ENCODE measurements at regions of chr14 and their contacts with region 1.

Region 1: DNA sequence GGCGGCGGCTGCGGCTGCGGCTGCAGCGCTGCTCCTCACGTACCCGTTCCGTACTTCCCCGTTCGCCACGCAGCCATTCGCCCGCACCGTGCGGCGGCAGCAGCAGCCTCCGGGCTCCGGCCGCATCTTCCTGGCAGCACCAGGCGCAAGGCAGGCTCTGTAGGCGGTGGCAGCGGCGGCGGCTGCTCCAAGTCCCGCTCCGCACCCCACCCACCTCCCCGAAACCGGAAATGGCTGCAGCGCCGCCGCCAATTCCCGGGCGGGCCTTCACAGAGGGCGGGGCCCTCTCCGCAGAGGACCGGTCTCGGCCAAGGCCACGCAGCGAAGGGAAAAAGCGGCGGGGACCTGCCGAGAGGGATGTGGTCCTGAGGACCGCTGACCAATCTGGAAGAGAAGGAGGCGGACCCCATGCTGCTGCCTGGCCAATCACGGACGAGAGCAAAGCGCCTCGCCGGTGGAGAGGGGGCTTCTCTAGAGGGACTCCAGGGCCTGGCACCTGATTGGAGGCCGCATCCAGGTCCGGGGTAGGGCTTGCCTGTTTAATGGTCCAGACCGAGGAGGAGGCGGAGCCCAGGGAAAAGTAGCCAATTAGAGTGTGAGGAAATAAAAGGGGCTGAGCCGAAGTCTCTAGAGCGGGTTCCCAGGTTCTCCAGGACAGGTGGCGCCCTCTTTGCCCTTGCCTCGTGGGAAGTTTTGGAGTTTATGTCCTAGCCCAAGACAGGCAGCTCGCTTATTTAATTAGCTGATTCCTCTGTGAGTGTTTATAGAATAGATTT is at the start of gene SPTLC2:
- DNase-seq: peak; percentile 95 to 99 (median 97)
- H3K4me3 ChIP-seq: peak within 1 kb of the TSS; percentile 50 to 59
- H3K4me3 Mint-ChIP-seq: peak within 1 kb of the TSS; percentile 88 to 98 (median 92)
- H3K27ac ChIP-seq: peak within 1 kb of the TSS; percentile 68
- H3K27ac Mint-ChIP-seq: peak within 1 kb of the TSS; percentile 86 to 96 (median 92)
- H3K4me1 ChIP-seq: peaks cover 44% of the 10 kb centered on the region
- H3K4me1 Mint-ChIP-seq: peaks cover 29 to 52% (median 38%) of the 10 kb centered on the region in 4 donors
- H3K27me3 ChIP-seq: no peaks in the 10 kb centered on the region
- H3K27me3 Mint-ChIP-seq: no peaks in the 10 kb centered on the region
- total RNA-seq, gene SPTLC2: 25.9 to 31.3 TPM

Region 2: GRCh38 chr14:77376771-77377501 is 239.7 kb before region 1 on chr14 and contains the starts of genes SAMD15 and TMED8:
- CTCF ChIA-PET with region 1: no interaction called
- POLR2A ChIA-PET with region 1: interaction called, 3 read pairs
- intact Hi-C with region 1: loop called (anchors 10 kb)
- DNase-seq: peak; percentile 81 to 87 (median 87)
- H3K4me3 ChIP-seq: peak within 1 kb of the TSS; percentile 94 to 97
- H3K4me3 Mint-ChIP-seq: peak within 1 kb of the TSS; percentile 85 to 94 (median 90)
- H3K27ac ChIP-seq: peak within 1 kb of the TSS; percentile 74
- H3K27ac Mint-ChIP-seq: peak within 1 kb of the TSS in 6 of 7 donors; percentile 84 to 95 (median 92)
- H3K4me1 ChIP-seq: peaks cover 46% of the 10 kb centered on the region
- H3K4me1 Mint-ChIP-seq: peaks cover 30 to 42% (median 36%) of the 10 kb centered on the region in 4 donors
- H3K27me3 ChIP-seq: no peaks in the 10 kb centered on the region
- H3K27me3 Mint-ChIP-seq: no peaks in the 10 kb centered on the region
- total RNA-seq, gene SAMD15: 0.11 to 0.38 TPM
- total RNA-seq, gene TMED8: 8.3 to 8.6 TPM

Region 3: DNA sequence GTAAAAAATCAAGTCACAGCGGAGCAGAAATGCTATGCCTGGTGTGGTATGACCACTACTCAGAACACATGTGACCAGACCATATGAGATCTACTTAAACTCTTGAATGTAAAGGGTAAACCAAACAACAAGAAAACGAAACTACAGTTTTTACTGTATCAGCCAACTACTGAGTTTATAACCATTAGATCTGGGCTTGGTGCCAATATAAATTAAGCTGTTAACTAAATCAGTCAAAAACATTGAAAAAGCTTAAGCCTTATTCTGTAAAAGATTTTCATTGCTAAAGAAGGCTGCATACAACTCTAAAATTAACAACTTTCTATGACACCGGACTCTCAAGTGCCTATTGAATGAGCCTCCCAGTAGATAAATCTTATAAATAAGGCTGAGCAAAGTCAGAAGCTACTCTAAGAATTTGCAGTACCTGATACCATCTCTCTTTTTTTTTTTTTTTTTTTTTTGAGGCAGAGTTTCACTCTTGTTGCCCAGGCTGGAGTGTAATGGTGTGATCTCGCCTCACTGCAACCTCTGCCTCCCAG is 35.6 kb before region 1 on chr14:
- CTCF ChIA-PET with region 1: interaction called, 5 read pairs
- POLR2A ChIA-PET with region 1: interaction called, 4 read pairs
- intact Hi-C with region 1: loop called (anchors 2 kb)
- DNase-seq: peak; percentile 41 to 69 (median 65)
- H3K4me3 ChIP-seq: peak overlapping the region in 1 of 2 donors; percentile 23
- H3K4me3 Mint-ChIP-seq: peak overlapping the region; percentile 60 to 90 (median 80)
- H3K27ac ChIP-seq: peak overlapping the region; percentile 29
- H3K27ac Mint-ChIP-seq: peak overlapping the region; percentile 37 to 90 (median 86)
- H3K4me1 ChIP-seq: peaks cover 20% of the 10 kb centered on the region
- H3K4me1 Mint-ChIP-seq: peaks cover 18 to 40% (median 31%) of the 10 kb centered on the region in 4 donors
- H3K27me3 ChIP-seq: no peaks in the 10 kb centered on the region
- H3K27me3 Mint-ChIP-seq: no peaks in the 10 kb centered on the region

Region 4: DNA sequence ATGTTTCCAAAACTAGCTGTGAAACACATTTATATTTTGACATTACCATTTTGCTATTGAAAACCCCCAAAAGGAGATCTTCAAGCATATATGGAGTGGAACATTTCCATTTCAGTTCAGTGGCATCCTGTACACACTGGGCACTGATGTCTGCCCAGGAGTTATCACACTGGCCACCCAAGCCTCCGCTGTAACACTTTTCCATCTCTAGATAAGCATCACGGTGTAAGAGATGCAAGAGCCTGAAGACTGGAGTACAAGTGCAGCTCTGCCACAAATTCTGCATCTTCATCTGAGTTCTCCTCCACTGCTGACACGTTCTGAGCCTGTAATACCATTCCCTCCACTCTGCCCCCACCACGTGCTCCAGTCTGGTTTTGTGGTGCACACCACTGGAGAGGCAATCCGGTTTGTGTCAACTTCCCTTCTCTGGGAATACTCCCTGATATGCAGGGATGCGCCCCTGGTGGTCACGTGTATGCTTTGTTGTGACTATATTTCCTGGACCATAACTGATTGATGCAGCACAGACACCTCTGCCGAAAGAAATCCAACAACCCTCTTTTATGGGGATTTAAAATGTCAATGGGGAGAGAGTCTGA is 12.9 kb before region 1 on chr14:
- CTCF ChIA-PET with region 1: interaction called, 4 read pairs
- POLR2A ChIA-PET with region 1: interaction called, 5 read pairs
- intact Hi-C with region 1: loop called (anchors 1 kb)
- DNase-seq: no peak
- H3K4me3 ChIP-seq: no peak overlapping the region
- H3K4me3 Mint-ChIP-seq: peak overlapping the region in 3 of 8 donors; percentile 0 to 15 (median 9)
- H3K27ac ChIP-seq: no peak overlapping the region
- H3K27ac Mint-ChIP-seq: peak overlapping the region in 5 of 7 donors; percentile 5 to 66 (median 48)
- H3K4me1 ChIP-seq: peaks cover 60% of the 10 kb centered on the region
- H3K4me1 Mint-ChIP-seq: peaks cover 43 to 76% (median 60%) of the 10 kb centered on the region in 4 donors
- H3K27me3 ChIP-seq: no peaks in the 10 kb centered on the region
- H3K27me3 Mint-ChIP-seq: no peaks in the 10 kb centered on the region

Region 5: GRCh38 chr14:77707724-77708408 is 91.2 kb after region 1 on chr14 and contains the starts of genes ALKBH1 and SLIRP:
- CTCF ChIA-PET with region 1: no interaction called
- POLR2A ChIA-PET with region 1: no interaction called
- intact Hi-C with region 1: loop called (anchors 1 kb)
- DNase-seq: peak; percentile 87 to 91 (median 87)
- H3K4me3 ChIP-seq: peak within 1 kb of the TSS; percentile 90 to 97
- H3K4me3 Mint-ChIP-seq: peak within 1 kb of the TSS; percentile 95 to 100 (median 98)
- H3K27ac ChIP-seq: peak within 1 kb of the TSS; percentile 80
- H3K27ac Mint-ChIP-seq: peak within 1 kb of the TSS; percentile 83 to 99 (median 96)
- H3K4me1 ChIP-seq: peaks cover 33% of the 10 kb centered on the region
- H3K4me1 Mint-ChIP-seq: peaks cover 26 to 49% (median 38%) of the 10 kb centered on the region in 4 donors
- H3K27me3 ChIP-seq: no peaks in the 10 kb centered on the region
- H3K27me3 Mint-ChIP-seq: no peaks in the 10 kb centered on the region
- total RNA-seq, gene ALKBH1: 16.2 to 20.1 TPM
- total RNA-seq, gene SLIRP: 37.5 to 40.6 TPM

Region 6: DNA sequence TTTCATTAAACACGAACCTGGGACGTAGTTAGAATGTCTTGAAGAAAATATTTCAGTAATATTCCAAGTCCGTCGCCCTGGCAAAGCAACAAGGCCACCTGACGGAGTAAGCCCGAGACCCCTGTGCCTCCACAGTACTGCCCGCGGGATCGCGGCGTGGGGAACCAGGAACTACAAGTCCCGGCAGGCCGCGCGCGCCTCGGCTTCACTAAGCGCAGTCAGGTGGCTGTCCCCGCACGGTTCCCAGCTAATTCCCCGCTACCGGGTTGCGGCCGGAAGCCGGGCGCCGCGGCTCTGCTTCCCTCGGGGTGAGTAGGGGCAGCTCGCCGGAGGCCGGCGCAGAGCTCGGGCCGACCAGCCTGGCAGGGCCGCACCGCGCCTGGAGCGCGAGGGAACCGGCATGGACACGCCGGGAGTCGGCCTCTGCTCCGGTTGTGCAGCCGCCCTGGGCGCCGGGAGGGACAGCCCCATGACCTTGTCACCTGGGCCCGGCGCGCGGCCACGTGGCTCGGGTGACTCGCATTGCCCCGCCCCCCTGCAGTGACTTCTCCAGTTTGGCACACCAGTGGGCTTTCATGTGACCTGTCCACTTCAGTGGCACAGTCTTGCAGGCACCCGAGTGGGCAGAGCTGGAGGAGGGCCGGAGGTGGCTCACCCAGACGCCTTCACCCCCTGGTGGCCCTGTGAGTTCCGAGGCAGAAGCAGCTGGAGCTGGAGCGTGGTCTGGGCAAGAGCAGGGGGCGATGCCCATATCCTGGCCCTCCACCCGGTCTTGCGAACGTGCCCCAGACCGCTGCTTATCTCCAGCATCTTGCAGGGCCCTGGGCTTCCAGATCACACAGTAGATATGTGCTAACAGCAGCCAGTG is 183.5 kb after region 1 on chr14 and contains the start of gene ADCK1:
- CTCF ChIA-PET with region 1: no interaction called
- POLR2A ChIA-PET with region 1: no interaction called
- intact Hi-C with region 1: loop called (anchors 2 kb)
- DNase-seq: peak; percentile 83 to 88 (median 85)
- H3K4me3 ChIP-seq: peak within 1 kb of the TSS; percentile 83 to 87
- H3K4me3 Mint-ChIP-seq: peak within 1 kb of the TSS; percentile 83 to 90 (median 86)
- H3K27ac ChIP-seq: peak within 1 kb of the TSS; percentile 71
- H3K27ac Mint-ChIP-seq: peak within 1 kb of the TSS; percentile 77 to 93 (median 91)
- H3K4me1 ChIP-seq: peaks cover 7% of the 10 kb centered on the region
- H3K4me1 Mint-ChIP-seq: peaks cover 2 to 11% (median 9%) of the 10 kb centered on the region in 4 donors
- H3K27me3 ChIP-seq: no peaks in the 10 kb centered on the region
- H3K27me3 Mint-ChIP-seq: no peaks in the 10 kb centered on the region
- total RNA-seq, gene ADCK1: 5.3 to 5.6 TPM